Esophagus muscularis mucosa (tissue), 4 donors: ENCODE measurements at regions of chr17 and their contacts with region 1.

Region 1: DNA sequence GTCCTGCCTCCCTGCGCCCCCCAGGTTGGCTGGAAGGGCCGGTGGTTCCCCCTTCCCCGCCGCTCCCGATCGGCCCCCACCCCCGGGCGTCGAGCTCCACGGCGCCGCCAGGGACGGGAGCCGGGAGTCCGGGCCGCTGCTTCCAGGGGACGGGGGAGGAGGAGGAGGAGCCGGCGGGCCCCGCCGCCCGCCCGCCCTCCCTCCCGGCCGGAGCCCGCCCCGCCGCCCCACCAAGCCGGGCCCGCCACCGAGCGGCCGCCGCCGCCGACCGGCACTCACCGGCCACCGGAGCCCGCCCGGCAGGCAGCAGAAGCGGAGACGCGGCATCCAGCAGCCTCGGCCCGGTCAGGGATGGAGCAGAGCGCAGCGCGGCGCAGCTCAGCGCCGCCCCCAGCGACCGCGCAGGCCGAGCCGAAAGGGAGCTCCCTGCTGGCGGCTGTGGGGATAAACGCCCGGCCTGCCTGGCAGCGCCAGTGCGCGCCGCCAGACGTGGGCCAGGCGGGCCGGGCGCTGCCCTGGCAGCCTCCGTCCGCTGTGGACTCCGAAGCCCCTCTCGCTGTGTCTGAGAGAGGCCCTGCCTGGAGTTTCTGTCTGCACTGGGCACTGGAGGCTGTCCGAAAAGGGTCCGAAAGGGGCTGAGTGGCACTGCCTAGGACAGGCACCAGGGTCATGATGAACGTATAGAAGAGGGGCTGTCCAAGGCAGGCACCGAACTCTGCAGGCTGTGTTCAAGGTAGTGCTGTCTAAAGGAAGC is at the start of gene MYO18A:
- DNase-seq: no peak
- H3K4me3 ChIP-seq: peak within 1 kb of the TSS; percentile 63 to 84 (median 64)
- H3K27ac ChIP-seq: peak within 1 kb of the TSS; percentile 86 to 89 (median 88)
- H3K4me1 ChIP-seq: peaks cover 45 to 56% (median 55%) of the 10 kb centered on the region in 4 donors
- H3K27me3 ChIP-seq: no peaks in the 10 kb centered on the region
- CTCF ChIP-seq: peak in 2 of 3 experiments; percentile 81 to 90
- EP300 ChIP-seq: no peak
- POLR2A ChIP-seq: no peak
- total RNA-seq, gene MYO18A: 46.7 to 82.7 (median 64.6) TPM

Region 2: DNA sequence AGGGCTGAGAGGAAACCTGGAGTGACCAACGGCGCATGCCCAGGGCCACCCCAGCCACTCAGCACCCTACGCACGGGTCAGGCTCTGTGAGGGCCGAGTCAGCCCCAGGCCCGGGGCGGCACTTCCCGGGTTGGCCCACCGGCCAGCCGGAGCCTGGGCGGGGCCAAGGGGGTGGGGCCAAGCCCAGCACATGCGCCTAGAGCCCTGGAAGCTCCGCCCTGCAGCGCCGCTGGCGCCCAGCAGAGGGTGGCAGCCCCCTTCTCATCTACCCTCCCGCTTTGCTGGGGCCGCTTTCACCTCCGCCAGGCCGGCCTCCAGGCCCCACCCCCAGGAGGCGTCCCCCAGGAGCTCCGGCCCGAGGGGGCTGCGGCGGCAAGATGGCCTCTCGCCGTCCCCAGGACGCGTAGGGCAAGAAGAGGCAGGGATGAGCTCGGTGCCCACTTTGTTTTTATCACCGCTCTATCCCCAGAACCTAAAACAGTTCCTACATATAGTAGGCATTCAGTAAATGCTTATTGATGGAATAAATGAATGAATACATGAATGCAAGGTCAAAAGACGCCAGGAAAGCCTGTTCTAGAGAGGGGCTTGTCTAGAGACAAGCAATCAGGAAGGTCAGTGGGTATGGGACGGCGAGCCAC is 31.3 kb before region 1 on chr17:
- intact Hi-C with region 1: loop called (anchors 2 kb)
- DNase-seq: peak; percentile 98
- H3K4me3 ChIP-seq: peak overlapping the region; percentile 57 to 63 (median 58)
- H3K27ac ChIP-seq: peak overlapping the region; percentile 80 to 87 (median 80)
- H3K4me1 ChIP-seq: peaks cover 32 to 57% (median 47%) of the 10 kb centered on the region in 4 donors
- H3K27me3 ChIP-seq: no peaks in the 10 kb centered on the region
- CTCF ChIP-seq: peak; percentile 97 to 99 (median 98)
- EP300 ChIP-seq: no peak
- POLR2A ChIP-seq: no peak

Region 3: DNA sequence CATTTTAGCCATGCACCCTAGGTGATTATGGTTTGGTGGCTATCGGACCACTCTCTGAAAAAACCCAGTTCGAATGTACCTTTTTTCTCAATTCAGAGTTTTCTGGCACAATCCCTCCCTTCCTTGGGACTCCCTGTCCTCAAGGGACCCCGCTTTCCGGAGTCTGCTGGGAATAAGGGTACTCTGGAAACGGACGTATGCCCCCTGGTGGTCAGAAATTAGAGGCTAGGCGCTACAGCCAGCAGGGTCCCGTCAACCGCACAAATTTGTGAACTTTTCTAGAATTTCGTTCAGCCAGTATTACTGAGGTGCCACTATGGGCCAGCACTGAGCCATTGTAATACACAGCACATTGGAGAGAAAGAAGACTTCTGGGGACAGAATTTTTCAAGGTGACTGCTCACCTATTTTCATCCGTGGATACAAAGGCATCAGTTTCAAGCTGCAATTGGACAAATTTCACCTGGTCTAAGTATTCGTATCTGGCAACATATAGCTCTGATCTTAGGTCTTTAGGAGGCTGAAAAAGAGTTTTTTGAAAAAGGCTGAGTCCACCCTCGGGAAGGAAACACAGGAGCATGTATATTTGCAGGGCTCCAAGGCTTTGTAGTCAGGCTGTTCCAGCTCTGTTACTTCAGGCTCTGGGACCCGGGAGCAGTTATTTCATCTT is 39.3 kb after region 1 on chr17:
- intact Hi-C with region 1: loop called (anchors 5 kb)
- DNase-seq: no peak
- H3K4me3 ChIP-seq: no peak overlapping the region
- H3K27ac ChIP-seq: no peak overlapping the region
- H3K4me1 ChIP-seq: peaks cover 0 to 9% (median 8%) of the 10 kb centered on the region in 4 donors
- H3K27me3 ChIP-seq: no peaks in the 10 kb centered on the region
- CTCF ChIP-seq: peak in 2 of 3 experiments; percentile 93 to 95
- EP300 ChIP-seq: no peak
- POLR2A ChIP-seq: no peak

Region 4: GRCh38 chr17:29256735-29257466 is 76.7 kb after region 1 on chr17:
- intact Hi-C with region 1: loop called (anchors 2 kb)
- DNase-seq: no peak
- H3K4me3 ChIP-seq: peak overlapping the region; percentile 3 to 37 (median 30)
- H3K27ac ChIP-seq: peak overlapping the region; percentile 64 to 77 (median 72)
- H3K4me1 ChIP-seq: peaks cover 44 to 71% (median 63%) of the 10 kb centered on the region in 4 donors
- H3K27me3 ChIP-seq: no peaks in the 10 kb centered on the region
- CTCF ChIP-seq: no peak
- EP300 ChIP-seq: no peak
- POLR2A ChIP-seq: no peak